ENCODE measurements at regions of chr16 and their contacts with region 1.

Region 1: DNA sequence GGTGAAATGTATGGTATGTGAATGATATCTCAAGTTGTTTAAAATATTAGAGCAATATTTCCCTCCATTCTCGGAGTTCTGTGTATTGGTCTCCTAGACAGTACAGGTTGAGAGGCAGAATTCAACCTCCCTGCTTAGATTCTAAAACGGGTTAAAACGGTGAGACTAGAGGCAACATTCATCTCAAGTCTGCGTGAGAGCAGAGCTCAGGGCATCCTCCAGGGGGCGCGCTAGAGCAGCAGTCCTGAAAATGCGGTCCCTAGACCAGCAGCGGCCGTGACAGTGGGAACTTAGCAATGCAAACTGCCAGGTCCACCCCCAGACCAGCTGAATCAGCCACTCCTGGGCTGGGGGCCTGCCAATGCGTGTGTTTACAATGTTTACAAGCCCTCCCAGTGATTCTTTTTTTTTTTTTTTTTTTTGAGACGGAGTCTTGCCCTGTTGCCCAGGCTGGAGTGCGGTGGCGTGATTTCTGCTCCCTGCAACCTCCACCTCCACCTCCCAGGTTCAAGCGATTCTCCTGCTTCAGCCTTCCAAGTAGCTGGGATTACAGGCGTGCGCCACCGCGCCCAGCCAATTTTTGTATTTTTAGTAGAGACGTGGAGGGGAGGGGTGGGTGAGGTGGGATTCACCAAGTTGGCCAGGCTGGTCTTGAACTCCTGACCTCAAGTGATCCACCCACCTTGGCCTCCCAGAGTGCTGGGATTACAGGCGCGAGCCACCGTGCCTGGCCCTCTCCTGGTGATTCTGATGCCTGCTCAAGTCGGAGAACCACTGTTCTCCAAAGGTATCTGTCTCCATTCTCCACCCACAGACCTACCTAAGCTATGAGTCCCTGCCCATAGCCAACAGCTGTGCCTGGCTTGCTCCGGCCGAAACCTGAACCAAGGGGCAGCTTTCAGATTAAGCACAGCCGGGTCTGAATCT is 24.2 kb downstream of the KLHL36 start:
- DNase-seq: peak; percentile 86
- ATAC-seq: peak; percentile 97
- H3K4me3 Mint-ChIP-seq: no peak overlapping the region
- H3K27ac Mint-ChIP-seq: no peak overlapping the region
- H3K4me1 Mint-ChIP-seq: peaks cover 6% of the 10 kb centered on the region
- H3K27me3 Mint-ChIP-seq: no peaks in the 10 kb centered on the region
- CTCF ChIP-seq: peak; percentile 90

Region 2: GRCh38 chr16:84647828-84648594 is 24.5 kb before region 1 on chr16 and contains the start of gene KLHL36:
- CTCF ChIA-PET with region 1: interaction called, 25 read pairs
- POLR2A ChIA-PET with region 1: no interaction called
- intact Hi-C with region 1: no loop called
- DNase-seq: peak; percentile 67
- ATAC-seq: peak; percentile 89
- H3K4me3 Mint-ChIP-seq: peak within 1 kb of the TSS; percentile 77
- H3K27ac Mint-ChIP-seq: peak within 1 kb of the TSS; percentile 83
- H3K4me1 Mint-ChIP-seq: peaks cover 35% of the 10 kb centered on the region
- H3K27me3 Mint-ChIP-seq: peaks cover 2% of the 10 kb centered on the region
- CTCF ChIP-seq: no peak
- total RNA-seq, gene KLHL36: 41.0 to 44.0 TPM

Region 3: DNA sequence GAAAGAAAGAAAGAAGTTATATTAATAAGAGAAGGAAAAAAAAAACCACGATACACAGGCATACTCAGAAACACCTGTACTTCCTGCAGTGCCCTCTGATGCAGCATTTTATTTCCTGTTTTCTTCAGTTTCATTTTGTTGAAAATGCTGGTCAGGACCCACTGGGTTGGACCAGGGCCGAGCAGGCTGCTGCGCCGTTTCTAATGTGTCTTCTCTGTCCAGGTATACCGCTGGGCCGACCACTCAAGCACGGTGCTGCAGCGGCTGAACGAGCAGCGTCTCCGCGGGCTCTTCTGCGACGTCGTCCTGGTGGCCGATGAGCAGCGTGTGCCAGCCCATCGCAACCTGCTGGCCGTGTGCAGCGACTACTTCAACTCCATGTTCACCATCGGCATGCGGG is 15.9 kb before region 1 on chr16:
- CTCF ChIA-PET with region 1: interaction called, 14 read pairs
- POLR2A ChIA-PET with region 1: no interaction called
- intact Hi-C with region 1: no loop called
- DNase-seq: no peak
- ATAC-seq: peak; percentile 34
- H3K4me3 Mint-ChIP-seq: no peak overlapping the region
- H3K27ac Mint-ChIP-seq: peak overlapping the region; percentile 46
- H3K4me1 Mint-ChIP-seq: peaks cover 43% of the 10 kb centered on the region
- H3K27me3 Mint-ChIP-seq: no peaks in the 10 kb centered on the region
- CTCF ChIP-seq: no peak

Region 4: DNA sequence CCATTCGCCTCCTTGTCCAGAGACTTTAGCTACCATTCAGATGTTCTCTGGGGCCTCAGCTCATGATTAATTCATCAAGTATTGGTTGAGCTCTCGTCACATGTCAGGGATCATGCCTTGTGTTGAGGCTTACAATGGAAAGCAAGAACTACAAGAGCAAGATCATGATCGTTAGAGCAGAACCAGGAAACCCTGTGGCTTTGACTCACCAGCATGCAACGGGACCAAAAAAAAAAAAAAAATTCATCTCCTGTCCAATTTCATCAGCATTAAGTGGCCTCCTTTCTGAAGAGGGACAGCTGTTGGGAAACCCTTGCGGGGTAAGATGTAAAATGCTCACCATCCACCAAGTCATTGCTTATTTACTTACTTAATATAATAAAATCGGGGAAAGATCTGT is 15.2 kb after region 1 on chr16:
- CTCF ChIA-PET with region 1: interaction called, 36 read pairs
- POLR2A ChIA-PET with region 1: no interaction called
- intact Hi-C with region 1: no loop called
- DNase-seq: peak; percentile 20
- ATAC-seq: peak; percentile 69
- H3K4me3 Mint-ChIP-seq: no peak overlapping the region
- H3K27ac Mint-ChIP-seq: no peak overlapping the region
- H3K4me1 Mint-ChIP-seq: peaks cover 9% of the 10 kb centered on the region
- H3K27me3 Mint-ChIP-seq: peaks cover 10% of the 10 kb centered on the region
- CTCF ChIP-seq: no peak

Region 5: DNA sequence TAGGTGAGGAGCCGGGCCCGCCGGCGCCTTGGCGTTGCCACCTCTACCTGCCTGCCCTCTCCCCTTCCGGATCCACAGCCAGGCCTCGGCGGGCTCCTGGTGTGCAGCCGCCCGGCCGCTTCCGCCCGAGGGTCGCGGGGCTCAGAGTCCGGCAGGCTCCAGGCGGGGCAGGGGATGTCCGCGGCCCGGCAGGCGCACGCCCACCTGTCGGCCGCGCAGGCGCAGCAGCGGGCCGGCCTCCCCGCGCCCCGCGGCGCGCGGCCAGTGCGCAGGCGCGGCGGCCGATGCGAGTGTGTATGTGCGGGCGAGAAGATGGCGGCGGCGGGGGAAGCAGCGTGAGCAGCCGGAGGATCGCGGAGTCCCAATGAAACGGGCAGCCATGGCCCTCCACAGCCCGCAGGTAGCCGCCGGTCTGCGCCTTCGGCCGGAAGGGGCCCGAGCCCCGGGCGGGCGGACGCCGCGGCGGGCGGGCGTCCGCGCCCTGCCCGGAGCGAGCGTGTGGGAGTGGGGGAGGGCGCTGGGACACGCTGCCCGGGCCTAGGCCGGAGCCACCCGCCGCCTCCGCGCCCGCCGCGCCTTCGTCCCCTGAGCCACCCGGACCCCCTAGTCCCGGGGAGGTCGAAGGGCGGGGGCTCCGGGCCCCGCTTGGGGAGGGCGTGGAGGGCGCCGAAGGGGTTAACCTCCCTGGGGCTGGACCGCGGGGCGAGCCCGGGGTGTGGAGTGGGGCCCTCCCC is 27.3 kb after region 1 on chr16 and contains the start of gene USP10:
- CTCF ChIA-PET with region 1: interaction called, 13 read pairs
- POLR2A ChIA-PET with region 1: interaction called, 4 read pairs
- intact Hi-C with region 1: no loop called
- DNase-seq: peak; percentile 85
- ATAC-seq: peak; percentile 84
- H3K4me3 Mint-ChIP-seq: peak within 1 kb of the TSS; percentile 98
- H3K27ac Mint-ChIP-seq: peak within 1 kb of the TSS; percentile 96
- H3K4me1 Mint-ChIP-seq: peaks cover 36% of the 10 kb centered on the region
- H3K27me3 Mint-ChIP-seq: no peaks in the 10 kb centered on the region
- CTCF ChIP-seq: no peak
- total RNA-seq, gene USP10: 116 TPM

Region 6: GRCh38 chr16:84720177-84720579 is 47.6 kb after region 1 on chr16:
- CTCF ChIA-PET with region 1: interaction called, 70 read pairs
- POLR2A ChIA-PET with region 1: interaction called, 3 read pairs
- intact Hi-C with region 1: no loop called
- DNase-seq: no peak
- ATAC-seq: no peak
- H3K4me3 Mint-ChIP-seq: no peak overlapping the region
- H3K27ac Mint-ChIP-seq: no peak overlapping the region
- H3K4me1 Mint-ChIP-seq: peaks cover 58% of the 10 kb centered on the region
- H3K27me3 Mint-ChIP-seq: no peaks in the 10 kb centered on the region
- CTCF ChIP-seq: no peak

Measured in activated CD8-positive, alpha-beta T cell treated with anti-CD3 and anti-CD28 coated beads for 36 hours (primary cell).